ENCODE measurements at regions of chr13 and their contacts with region 1.

Region 1: DNA sequence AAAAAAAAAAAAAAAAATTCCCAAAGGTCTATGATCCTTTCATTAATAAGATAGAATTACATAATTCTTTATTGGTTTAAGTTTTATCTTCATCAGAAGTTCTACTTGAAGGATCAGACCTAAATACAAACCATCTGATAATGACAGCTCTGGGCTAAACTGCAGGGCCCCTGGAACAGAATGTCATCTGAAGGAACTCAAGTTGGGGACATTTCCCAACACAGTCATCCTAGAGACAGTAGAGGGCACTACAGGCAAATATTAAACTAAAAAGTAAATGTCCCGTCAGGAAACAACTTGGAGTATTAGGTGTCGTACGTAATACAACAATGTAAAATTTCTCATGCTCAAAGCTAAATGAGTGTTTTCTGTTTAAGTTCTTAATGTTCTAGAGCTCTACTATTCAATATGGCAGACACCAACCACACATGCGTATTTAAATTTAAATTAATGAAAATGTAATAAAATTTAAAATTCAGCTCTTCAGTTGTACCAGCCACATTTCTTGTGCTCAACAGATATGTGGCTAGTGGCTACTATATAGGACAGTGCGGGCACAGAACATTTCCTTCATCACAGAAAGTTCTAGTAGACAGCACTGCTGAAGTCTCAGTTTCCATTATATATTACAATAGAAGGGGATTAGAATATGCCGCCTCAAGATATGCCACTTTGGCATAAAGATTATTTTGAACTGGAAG is 21.8 kb upstream of the NAXD start:
- DNase-seq: peak; percentile 49
- H3K4me3 ChIP-seq: no peak overlapping the region
- H3K27ac ChIP-seq: no peak overlapping the region
- H3K4me1 ChIP-seq: no peaks in the 10 kb centered on the region
- CTCF ChIP-seq: peak; percentile 75

Region 2: DNA sequence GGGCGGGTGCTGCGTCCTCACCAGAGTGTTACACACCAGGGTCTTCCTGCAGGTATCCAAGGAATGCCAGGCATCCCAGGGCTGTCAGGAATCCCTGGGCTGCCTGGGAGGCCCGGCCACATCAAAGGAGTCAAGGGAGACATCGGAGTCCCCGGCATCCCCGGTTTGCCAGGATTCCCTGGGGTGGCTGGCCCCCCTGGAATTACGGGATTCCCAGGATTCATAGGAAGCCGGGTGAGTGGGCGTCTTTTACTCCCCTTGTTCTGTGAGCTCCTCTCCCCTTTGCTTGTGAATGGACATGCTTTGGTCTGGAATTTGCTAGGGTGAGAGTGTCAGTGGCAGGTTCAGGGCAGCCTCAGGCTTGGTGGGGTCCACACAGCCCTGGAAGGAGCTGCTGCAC is 108.0 kb before region 1 on chr13:
- CTCF ChIA-PET with region 1: no interaction called
- POLR2A ChIA-PET with region 1: no interaction called
- intact Hi-C with region 1: no loop called
- DNase-seq: no peak
- H3K4me3 ChIP-seq: no peak overlapping the region
- H3K27ac ChIP-seq: no peak overlapping the region
- H3K4me1 ChIP-seq: no peaks in the 10 kb centered on the region
- CTCF ChIP-seq: no peak

Region 3: GRCh38 chr13:110538632-110539031 is 54.9 kb before region 1 on chr13:
- CTCF ChIA-PET with region 1: no interaction called
- POLR2A ChIA-PET with region 1: no interaction called
- intact Hi-C with region 1: no loop called
- DNase-seq: no peak
- H3K4me3 ChIP-seq: no peak overlapping the region
- H3K27ac ChIP-seq: no peak overlapping the region
- H3K4me1 ChIP-seq: no peaks in the 10 kb centered on the region
- CTCF ChIP-seq: no peak

Region 4: DNA sequence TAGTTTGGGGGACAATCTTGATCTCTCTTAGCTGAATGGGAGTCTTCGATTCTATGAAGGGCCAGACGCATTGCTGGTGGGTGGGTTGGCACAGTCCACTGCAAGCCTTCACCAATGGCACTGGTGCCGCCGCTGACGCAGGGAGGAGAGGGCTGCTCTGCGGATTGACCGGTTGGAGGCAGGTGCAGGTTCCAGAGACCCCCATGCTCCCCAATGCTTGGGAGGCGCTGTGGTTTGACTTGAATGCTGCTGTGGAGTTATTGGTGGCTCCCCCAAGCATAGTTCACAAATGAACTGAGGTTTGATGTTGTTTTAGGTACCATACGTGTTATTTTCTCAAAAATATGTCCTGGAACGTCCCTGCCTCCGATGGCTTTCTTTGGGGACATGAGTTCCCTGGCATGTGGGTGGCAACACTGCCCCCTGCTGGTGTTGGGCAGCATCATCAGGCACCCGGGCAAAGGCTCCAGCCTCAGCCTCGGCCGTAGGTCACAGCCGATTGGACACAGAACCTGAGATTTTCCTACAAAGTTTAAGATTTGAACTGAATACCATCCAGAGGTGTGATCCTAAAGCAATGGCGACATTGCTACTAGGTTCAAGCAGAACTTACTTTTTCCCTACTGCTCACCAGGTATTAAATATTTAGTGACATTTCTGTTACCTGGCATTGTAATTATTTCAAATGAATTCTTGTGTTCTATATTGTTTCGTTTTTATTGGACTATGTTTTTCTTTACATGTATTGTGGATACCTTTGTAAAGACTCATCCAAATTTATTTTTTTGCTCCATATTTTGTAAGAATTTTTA is 225.8 kb after region 1 on chr13:
- CTCF ChIA-PET with region 1: no interaction called
- POLR2A ChIA-PET with region 1: no interaction called
- intact Hi-C with region 1: loop called (anchors 2 kb)
- DNase-seq: peak; percentile 48
- H3K4me3 ChIP-seq: no peak overlapping the region
- H3K27ac ChIP-seq: no peak overlapping the region
- H3K4me1 ChIP-seq: no peaks in the 10 kb centered on the region
- CTCF ChIP-seq: peak; percentile 84

Region 5: DNA sequence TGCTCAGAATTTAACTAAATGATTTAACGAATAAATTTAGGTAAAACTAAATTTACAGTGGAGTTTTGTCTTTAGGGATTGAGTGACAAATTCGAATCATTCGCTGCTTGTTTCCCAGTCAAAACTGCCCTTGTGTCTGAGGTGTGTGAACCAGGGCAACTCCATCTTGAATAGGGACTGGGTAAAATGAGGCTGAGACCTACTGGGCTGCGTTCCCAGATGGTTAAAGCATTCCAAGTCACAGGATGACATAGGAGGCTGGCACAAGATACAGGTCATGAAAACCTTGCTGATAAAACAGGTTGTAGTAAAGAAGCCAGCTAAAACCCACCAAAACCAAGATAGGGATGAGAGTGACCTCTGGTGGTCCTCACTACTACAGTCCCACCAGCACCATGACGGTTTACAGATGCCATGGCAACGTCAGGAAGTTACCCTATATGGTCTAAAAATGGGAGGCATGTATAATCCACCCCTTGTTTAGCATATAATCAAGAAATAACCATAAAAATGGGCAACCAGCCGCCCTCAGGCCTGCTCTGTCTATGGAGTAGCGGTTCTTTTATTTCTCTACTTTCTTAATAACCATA is 331.5 kb after region 1 on chr13:
- CTCF ChIA-PET with region 1: no interaction called
- POLR2A ChIA-PET with region 1: no interaction called
- intact Hi-C with region 1: loop called (anchors 10 kb)
- DNase-seq: peak; percentile 45
- H3K4me3 ChIP-seq: no peak overlapping the region
- H3K27ac ChIP-seq: no peak overlapping the region
- H3K4me1 ChIP-seq: peaks cover 7% of the 10 kb centered on the region
- CTCF ChIP-seq: peak; percentile 61